ENCODE measurements at regions of chr2 and their contacts with region 1.

Region 1: GRCh38 chr2:122506620-122507019 is 751.2 kb downstream of the TSN start:
- DNase-seq: no peak
- ATAC-seq: no peak

Region 2: DNA sequence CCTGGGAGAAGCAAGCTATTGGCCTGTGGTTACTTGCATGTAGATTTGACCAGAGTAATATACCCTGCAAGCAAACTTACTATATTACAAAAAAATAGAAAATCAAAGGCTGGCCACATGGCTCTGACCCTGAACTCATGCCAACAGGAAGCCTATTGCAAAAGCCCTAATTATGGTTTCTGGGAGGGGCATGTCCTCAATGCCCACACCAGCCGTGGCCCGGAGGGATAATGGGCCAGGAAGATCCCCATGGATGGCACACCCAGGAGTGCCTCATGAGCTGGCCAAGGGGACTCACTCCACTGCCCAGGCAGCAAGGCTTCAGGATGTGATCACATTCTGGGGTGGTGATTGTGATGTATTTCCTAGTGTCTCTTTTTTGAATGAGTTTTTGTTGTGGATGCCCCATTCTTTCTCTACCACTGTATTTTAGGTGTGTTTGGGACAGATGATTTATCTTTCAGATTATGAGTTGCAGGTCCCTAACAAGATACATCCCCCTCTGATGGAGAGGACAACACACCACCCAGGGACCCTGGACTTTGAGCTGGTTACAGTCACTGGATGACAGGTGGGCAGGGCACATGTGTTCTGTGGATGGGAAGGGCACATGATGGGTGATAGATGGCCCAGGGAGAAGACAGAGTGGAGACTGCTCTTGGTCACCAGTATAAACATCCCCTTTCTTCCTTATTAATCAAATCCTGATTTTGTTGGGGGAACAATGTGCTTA is 1202.9 kb before region 1 on chr2:
- intact Hi-C with region 1: loop called (anchors 5 kb)
- DNase-seq: no peak
- ATAC-seq: no peak

Region 3: GRCh38 chr2:123209202-123209601 is 702.6 kb after region 1 on chr2:
- intact Hi-C with region 1: no loop called
- DNase-seq: no peak
- ATAC-seq: no peak

Measured in sciatic nerve (tissue), 2 donors.